GM12878 (cell line): ENCODE measurements at regions of chr2 and their contacts with region 1.

Region 1: DNA sequence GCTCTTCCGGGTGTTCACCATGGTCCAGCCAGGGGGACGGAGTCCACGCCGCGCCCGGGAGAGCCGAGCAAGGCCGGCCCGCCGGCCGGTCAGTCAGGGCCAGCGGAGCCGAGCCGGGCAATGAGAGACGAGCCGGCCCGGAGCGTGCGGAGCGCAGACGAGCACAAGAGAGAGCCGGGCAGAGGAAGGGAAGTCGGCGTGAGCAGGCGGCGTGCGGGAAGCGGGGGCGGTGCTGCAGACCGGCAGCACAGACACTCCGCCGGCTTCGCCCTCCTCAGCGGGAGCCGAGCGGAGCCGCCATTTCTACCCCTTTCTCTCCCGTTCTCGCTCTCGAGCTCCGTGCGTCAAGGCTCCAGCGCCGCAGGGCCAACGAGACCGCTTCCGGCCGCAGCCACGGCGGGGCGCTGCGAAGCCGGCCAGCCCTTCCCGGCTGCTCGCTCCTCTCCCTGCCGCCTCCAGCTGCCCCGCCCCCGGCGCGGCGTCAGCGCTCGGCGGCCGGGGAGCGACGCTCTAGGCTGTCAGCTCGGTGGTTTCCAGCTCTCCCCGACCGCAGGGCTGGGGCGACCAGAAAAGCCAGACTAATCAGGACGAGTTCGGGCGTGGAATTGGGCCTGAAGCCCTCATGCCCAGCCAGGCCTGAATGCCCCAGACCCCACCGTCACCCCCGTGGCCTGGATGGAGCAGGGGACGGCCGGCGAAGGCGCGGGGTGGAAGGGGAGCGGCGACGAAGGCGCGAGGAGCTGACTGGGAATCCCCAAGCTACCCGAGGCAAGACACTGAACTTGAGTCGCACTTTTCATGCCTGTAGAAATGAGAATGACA is at the start of gene ATAD2B:
- DNase-seq: peak; percentile 89
- ATAC-seq: peak; percentile 83
- H3K4me3 ChIP-seq: peak within 1 kb of the TSS; percentile 89
- H3K27ac ChIP-seq: peak within 1 kb of the TSS; percentile 99
- H3K4me1 ChIP-seq: peaks cover 9% of the 10 kb centered on the region
- H3K27me3 ChIP-seq: no peaks in the 10 kb centered on the region
- CTCF ChIP-seq: peak; percentile 80 to 93 (median 93); a peak in 5 of 6 replicates
- EP300 ChIP-seq: peak; percentile 13 to 14; a peak in 1 of 4 replicates
- POLR2A ChIP-seq: peak; percentile 94
- RAD21 ChIP-seq: peak; percentile 68
- polyA plus RNA-seq, gene ATAD2B: 3.6 to 5.4 TPM

Region 2: DNA sequence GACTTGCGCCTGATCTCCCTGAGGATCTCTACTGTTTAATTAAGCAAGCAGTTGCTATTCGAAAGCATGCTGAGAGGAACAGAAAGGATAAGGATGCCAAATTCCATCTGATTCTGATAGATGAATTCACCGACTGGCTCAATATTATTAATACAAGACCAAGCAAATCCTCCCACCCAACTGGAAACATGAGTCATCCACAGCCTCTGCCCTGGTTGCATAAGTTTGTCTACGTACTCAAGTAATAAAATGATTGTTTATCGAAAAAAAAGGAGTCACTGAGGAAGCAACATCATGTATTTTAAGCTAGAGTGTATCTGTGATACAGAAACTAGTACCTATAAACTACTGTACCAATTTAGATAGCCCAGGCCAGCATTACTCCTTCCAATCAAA is 26.0 kb before region 1 on chr2:
- CTCF ChIA-PET with region 1: interaction called, 9 read pairs
- POLR2A ChIA-PET with region 1: interaction called, 5 read pairs
- RAD21 ChIA-PET with region 1: interaction called, 4 read pairs
- SMC1A ChIA-PET with region 1: interaction called, 20 read pairs
- in situ Hi-C with region 1: no loop called
- intact Hi-C with region 1: no loop called
- DNase-seq: no peak
- ATAC-seq: no peak
- H3K4me3 ChIP-seq: no peak overlapping the region
- H3K27ac ChIP-seq: no peak overlapping the region
- H3K4me1 ChIP-seq: no peaks in the 10 kb centered on the region
- H3K27me3 ChIP-seq: no peaks in the 10 kb centered on the region
- CTCF ChIP-seq: no peak
- EP300 ChIP-seq: no peak
- POLR2A ChIP-seq: no peak
- RAD21 ChIP-seq: no peak

Region 3: GRCh38 chr2:23939987-23940717 is 13.2 kb after region 1 on chr2 and contains the start of gene UBXN2A:
- CTCF ChIA-PET with region 1: interaction called, 58 read pairs
- POLR2A ChIA-PET with region 1: interaction called, 97 read pairs
- RAD21 ChIA-PET with region 1: interaction called, 84 read pairs
- SMC1A ChIA-PET with region 1: interaction called, 65 read pairs
- in situ Hi-C with region 1: no loop called
- intact Hi-C with region 1: loop called (anchors 1 kb)
- DNase-seq: no peak
- ATAC-seq: peak; percentile 80
- H3K4me3 ChIP-seq: peak within 1 kb of the TSS; percentile 96
- H3K27ac ChIP-seq: peak within 1 kb of the TSS; percentile 87
- H3K4me1 ChIP-seq: peaks cover 7% of the 10 kb centered on the region; the same call in 1 of the 2 replicates
- H3K27me3 ChIP-seq: no peaks in the 10 kb centered on the region
- CTCF ChIP-seq: no peak
- EP300 ChIP-seq: no peak
- POLR2A ChIP-seq: peak; percentile 92
- RAD21 ChIP-seq: no peak
- polyA plus RNA-seq, gene UBXN2A: 3.7 to 7.2 TPM

Region 4: GRCh38 chr2:24058564-24059271 is 131.8 kb after region 1 on chr2:
- CTCF ChIA-PET with region 1: interaction called, 26 read pairs
- POLR2A ChIA-PET with region 1: interaction called, 5 read pairs
- RAD21 ChIA-PET with region 1: interaction called, 18 read pairs
- SMC1A ChIA-PET with region 1: interaction called, 15 read pairs
- in situ Hi-C with region 1: no loop called
- intact Hi-C with region 1: no loop called
- DNase-seq: no peak
- ATAC-seq: peak; percentile 43
- H3K4me3 ChIP-seq: no peak overlapping the region
- H3K27ac ChIP-seq: no peak overlapping the region
- H3K4me1 ChIP-seq: peaks cover 4% of the 10 kb centered on the region; the same call in 1 of the 2 replicates
- H3K27me3 ChIP-seq: no peaks in the 10 kb centered on the region
- CTCF ChIP-seq: no peak
- EP300 ChIP-seq: no peak
- POLR2A ChIP-seq: no peak
- RAD21 ChIP-seq: no peak

Region 5: DNA sequence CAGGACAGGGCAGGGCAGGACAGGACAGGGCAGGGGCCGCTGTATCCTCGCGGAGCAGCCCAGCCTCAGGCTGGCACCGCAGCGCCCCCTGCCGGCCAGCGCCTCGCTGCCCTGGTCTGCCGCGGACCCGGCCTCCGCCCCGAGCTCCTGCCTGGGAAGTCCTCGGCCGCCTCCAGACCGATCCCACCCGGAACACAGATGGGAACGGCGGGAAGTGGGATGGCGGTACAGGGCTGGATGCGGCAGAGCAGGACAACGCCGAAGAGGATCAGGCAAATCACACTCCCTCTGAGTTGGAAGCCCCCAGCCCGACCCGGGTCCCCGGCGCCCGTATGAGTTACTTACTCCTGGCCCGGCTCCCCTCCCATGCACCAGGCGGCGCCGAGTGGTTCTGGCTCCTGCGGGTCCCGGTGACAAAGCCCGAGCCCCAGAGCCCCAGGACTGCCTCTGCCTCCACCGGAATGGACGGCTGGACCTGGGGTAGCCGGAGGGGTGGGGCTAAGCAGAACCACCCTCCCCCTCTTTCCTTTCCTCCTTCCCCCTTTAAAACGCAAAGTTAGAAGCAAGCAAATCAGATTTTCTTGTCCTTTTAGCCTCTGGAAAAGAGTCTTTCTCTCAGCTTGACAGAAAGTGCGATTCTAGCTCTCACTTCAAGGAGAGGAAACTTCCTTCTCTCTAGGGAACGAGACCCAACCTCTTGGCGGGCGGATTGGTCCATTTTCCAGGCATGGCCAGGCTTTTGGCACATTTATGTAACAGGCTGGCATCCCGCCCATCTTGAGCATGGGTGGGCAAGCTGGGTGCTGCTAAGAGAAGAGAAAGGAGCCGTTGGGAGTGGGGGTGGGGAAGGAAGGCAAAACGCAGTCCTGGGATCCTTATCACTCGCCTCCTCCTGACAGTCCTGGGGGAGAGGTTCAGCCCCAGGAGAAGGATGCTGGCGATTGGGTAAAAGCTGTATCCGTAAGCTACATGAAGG is 157.7 kb after region 1 on chr2 and contains the start of gene TP53I3:
- CTCF ChIA-PET with region 1: interaction called, 65 read pairs
- POLR2A ChIA-PET with region 1: interaction called, 25 read pairs
- RAD21 ChIA-PET with region 1: interaction called, 98 read pairs
- SMC1A ChIA-PET with region 1: interaction called, 30 read pairs
- in situ Hi-C with region 1: no loop called
- intact Hi-C with region 1: loop called (anchors 2 kb)
- DNase-seq: peak; percentile 46
- ATAC-seq: peak; percentile 94
- H3K4me3 ChIP-seq: peak within 1 kb of the TSS; percentile 70
- H3K27ac ChIP-seq: peak within 1 kb of the TSS; percentile 87
- H3K4me1 ChIP-seq: peaks cover 12% of the 10 kb centered on the region
- H3K27me3 ChIP-seq: no peaks in the 10 kb centered on the region
- CTCF ChIP-seq: peak; percentile 84 to 89 (median 86)
- EP300 ChIP-seq: 0 out of 4 replicates have a peak, but pooled peaks of 1 of the 2 experiments have one; percentile 9
- POLR2A ChIP-seq: no peak
- RAD21 ChIP-seq: peak; percentile 66
- polyA plus RNA-seq, gene TP53I3: 1.4 to 2.6 TPM

Region 6: DNA sequence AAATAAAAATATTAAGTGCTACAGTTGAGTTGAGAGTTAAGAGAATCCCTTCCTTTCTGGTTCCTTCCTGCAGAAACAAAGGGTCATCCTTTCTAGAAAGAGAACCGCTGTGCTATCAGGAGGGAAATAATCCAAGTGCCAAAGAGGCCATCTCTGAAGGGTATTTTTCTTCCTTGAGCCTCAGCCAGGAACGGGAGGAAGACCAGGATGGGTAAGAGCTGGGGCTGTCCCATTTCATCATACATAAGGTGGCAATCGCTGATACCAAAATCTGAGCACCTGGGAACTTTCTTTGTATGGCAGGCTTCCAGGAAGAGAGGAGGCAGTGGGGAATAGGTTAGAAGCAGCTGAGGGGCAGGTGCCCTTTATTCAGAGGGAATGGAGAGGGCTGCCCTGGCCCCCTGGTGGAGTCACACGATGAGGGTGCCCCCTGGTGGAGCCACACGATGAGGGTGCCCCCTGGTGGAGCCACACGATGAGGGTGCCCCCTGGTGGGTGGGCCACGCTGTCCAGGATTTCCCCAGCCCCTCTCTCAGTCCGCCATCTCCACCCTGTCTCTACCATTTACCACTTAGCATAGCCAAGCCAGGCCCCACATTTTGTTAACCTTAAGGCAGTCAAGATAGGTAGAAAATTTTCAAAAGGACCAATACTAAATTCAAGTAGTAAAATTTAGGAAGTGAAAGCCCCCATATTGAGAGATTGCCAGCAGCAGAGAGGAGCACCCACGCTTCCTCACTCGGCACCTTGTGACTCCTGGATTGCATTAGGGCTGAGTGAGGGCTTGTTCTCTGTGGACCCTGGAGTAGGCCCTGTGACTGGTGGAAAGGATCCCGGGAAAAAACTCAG is 237.4 kb after region 1 on chr2:
- CTCF ChIA-PET with region 1: interaction called, 6 read pairs
- POLR2A ChIA-PET with region 1: interaction called, 5 read pairs
- RAD21 ChIA-PET with region 1: interaction called, 5 read pairs
- SMC1A ChIA-PET with region 1: interaction called, 12 read pairs
- in situ Hi-C with region 1: no loop called
- intact Hi-C with region 1: no loop called
- DNase-seq: peak; percentile 21
- ATAC-seq: peak; percentile 95
- H3K4me3 ChIP-seq: no peak overlapping the region
- H3K27ac ChIP-seq: no peak overlapping the region; the same call in 1 of the 2 replicates
- H3K4me1 ChIP-seq: 0 out of 2 replicates have a peak, but pooled peaks cover 4% of the 10 kb centered on the region
- H3K27me3 ChIP-seq: no peaks in the 10 kb centered on the region
- CTCF ChIP-seq: peak; percentile 73 to 88 (median 79)
- EP300 ChIP-seq: no peak
- POLR2A ChIP-seq: no peak
- RAD21 ChIP-seq: peak; percentile 59